PC-9 (cell line): ENCODE measurements at regions of chr5 and their contacts with region 1.

Region 1: DNA sequence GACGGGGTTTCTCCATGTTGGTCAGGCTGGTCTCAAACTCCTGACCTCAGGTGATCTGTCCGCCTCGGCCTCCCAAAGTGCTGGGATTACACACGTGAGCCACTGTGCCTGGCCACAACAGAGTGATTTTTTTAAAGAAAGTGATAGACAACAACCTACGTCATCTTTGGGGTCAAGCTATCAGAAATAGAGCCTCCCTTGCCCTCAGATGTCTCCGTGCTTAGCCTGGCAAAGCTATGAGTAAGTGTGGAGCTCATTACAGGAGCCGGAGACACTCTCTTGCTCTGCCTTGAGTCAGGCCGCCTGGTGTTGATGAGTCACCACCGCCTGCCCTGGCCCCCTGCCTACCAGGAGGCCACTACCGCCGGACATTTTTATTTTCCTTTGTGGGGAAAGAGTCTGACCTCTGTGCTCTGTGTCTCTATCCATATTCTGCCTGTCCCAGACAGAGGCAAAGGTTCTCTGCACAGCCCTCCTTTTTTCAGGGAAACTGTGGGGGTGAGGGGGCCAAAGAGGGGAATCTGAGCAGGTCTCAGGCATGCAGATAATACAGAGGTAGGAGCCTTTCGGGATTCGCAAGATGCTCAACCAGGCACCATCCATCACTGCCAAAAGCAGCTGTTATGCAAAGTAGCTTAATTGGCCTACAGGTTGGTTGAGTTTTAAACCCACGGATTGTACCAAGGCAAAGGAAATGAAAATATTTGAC is 123.7 kb upstream of the CPEB4 start:
- DNase-seq: peak; percentile 89 to 95
- H3K4me3 ChIP-seq: no peak overlapping the region
- H3K27ac ChIP-seq: peak overlapping the region; percentile 91
- H3K4me1 ChIP-seq: peaks cover 46% of the 10 kb centered on the region
- H3K27me3 ChIP-seq: no peaks in the 10 kb centered on the region
- CTCF ChIP-seq: no peak

Region 2: DNA sequence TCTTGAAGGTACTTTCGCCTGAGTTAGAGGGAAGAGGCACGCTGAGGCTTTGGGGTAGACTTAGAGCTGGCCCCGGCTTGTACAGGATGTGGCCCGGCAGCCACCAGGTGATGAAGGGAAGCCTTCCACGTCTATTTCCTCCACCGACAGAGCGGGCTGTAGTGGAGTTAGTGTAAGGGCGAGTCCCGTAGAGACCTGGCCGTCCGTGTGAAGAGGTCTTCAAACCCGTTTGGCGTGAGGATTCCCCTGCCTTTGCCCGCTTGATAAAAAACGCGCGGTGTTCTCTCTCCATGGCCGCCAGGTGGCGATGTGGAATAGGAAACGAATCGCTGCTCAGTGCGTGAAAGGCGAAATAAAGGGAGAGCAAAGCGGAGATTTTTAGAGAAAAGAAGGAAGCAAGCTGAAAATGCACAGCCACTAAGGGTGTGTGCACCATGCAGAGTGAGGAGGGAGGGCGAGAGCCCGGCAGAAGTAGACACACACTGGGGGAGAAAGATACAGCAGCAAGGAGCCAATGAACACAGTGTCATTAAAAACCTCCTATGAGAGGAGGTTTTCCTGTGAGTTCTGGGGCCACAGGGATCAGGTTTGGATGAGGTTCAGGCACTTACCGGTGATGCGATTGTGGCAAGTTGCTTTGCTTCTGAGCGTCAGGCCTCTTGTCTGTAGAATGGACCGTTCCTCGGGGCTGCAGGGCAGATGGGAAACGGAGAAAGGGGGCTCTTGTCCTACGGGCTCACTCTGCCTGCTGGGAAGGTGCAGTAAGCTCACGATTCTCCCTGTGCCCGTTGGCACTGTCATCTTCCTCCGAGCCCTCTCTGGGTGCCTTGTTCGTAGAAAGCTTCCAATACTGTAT is 470.4 kb before region 1 on chr5:
- CTCF ChIA-PET with region 1: no interaction called
- POLR2A ChIA-PET with region 1: no interaction called
- intact Hi-C with region 1: loop called (anchors 10 kb)
- DNase-seq: peak; percentile 71 to 83
- H3K4me3 ChIP-seq: peak overlapping the region; percentile 45; the same call in 1 of the 2 replicates
- H3K27ac ChIP-seq: peak overlapping the region; percentile 28
- H3K4me1 ChIP-seq: peaks cover 26% of the 10 kb centered on the region
- H3K27me3 ChIP-seq: no peaks in the 10 kb centered on the region
- CTCF ChIP-seq: peak; percentile 92

Region 3: DNA sequence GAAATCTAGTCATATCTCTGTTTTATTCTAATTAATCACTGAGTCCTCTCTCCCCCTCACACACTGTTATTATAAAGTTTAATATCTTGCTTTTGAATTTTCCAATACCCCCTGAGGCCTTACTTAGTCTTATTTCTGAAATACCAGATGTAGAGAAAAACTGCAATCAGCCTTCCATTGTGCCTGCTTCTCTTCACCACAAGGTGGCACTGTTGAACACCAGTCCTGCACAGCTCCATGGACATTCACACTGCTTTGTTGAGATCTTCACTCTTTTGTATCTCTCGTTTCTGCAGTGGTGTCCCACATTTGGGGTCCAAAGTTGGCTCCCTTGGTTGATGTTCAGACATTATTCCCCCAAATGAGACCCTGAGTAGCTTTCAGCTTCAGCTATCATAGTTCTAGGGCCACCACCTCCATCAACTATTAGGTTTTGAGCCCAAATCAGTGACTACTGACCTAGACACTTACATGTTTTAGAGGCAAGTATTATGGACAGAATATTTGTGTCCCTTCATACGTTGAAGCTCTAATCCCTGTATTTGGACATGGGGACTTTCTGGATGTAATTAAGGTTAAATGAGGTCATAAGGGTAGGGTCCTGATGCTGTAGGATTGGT is 172.3 kb before region 1 on chr5:
- CTCF ChIA-PET with region 1: no interaction called
- POLR2A ChIA-PET with region 1: no interaction called
- intact Hi-C with region 1: no loop called
- DNase-seq: peak in 1 of 2 experiments; percentile 9
- H3K4me3 ChIP-seq: no peak overlapping the region
- H3K27ac ChIP-seq: no peak overlapping the region
- H3K4me1 ChIP-seq: no peaks in the 10 kb centered on the region
- H3K27me3 ChIP-seq: no peaks in the 10 kb centered on the region
- CTCF ChIP-seq: peak; percentile 87

Region 4: GRCh38 chr5:173781814-173782670 is 17.6 kb after region 1 on chr5:
- CTCF ChIA-PET with region 1: no interaction called
- POLR2A ChIA-PET with region 1: interaction called, 5 read pairs
- intact Hi-C with region 1: loop called (anchors 2 kb)
- DNase-seq: peak; percentile 56 to 62
- H3K4me3 ChIP-seq: peak overlapping the region; percentile 7; the same call in 1 of the 2 replicates
- H3K27ac ChIP-seq: peak overlapping the region; percentile 78
- H3K4me1 ChIP-seq: peaks cover 47% of the 10 kb centered on the region
- H3K27me3 ChIP-seq: no peaks in the 10 kb centered on the region
- CTCF ChIP-seq: no peak

Region 5: DNA sequence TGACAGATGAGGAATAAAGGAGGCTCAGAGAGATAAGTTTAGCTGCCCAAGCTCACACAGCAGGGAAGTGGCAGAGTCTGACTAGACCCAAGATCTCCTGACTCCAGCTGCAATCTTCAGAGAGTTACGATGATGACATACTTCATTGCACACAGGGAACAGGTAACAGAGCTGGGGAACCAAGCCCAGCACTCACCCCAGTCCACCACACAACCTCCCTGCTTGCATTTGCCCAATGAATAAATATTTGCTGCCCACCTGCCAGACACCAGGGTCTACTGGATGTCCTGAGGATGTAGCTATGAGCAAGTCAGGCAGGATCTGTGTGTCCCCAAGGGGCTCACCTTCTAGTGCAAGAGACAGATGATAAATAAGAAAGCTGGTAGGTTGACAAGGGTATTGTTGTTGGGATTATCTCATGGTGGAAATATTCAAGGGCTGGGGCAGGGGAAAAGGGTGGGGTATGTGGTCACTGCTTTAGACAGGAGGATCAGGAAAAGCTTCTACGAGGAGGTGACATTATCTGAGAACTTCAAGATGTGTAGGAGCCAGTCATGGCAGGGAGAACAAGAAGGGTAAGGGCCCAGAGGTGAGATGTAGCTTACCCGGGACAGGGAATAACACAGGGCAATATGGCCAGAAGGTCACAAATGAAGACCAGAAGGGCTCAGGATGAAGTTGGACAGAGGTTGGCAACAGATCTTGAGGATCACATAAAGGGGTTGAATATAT is 95.1 kb after region 1 on chr5:
- CTCF ChIA-PET with region 1: interaction called, 3 read pairs
- POLR2A ChIA-PET with region 1: interaction called, 22 read pairs
- intact Hi-C with region 1: loop called (anchors 1 kb)
- DNase-seq: peak; percentile 73 to 83
- H3K4me3 ChIP-seq: no peak overlapping the region
- H3K27ac ChIP-seq: peak overlapping the region; percentile 54
- H3K4me1 ChIP-seq: peaks cover 50% of the 10 kb centered on the region
- H3K27me3 ChIP-seq: no peaks in the 10 kb centered on the region
- CTCF ChIP-seq: no peak

Region 6: DNA sequence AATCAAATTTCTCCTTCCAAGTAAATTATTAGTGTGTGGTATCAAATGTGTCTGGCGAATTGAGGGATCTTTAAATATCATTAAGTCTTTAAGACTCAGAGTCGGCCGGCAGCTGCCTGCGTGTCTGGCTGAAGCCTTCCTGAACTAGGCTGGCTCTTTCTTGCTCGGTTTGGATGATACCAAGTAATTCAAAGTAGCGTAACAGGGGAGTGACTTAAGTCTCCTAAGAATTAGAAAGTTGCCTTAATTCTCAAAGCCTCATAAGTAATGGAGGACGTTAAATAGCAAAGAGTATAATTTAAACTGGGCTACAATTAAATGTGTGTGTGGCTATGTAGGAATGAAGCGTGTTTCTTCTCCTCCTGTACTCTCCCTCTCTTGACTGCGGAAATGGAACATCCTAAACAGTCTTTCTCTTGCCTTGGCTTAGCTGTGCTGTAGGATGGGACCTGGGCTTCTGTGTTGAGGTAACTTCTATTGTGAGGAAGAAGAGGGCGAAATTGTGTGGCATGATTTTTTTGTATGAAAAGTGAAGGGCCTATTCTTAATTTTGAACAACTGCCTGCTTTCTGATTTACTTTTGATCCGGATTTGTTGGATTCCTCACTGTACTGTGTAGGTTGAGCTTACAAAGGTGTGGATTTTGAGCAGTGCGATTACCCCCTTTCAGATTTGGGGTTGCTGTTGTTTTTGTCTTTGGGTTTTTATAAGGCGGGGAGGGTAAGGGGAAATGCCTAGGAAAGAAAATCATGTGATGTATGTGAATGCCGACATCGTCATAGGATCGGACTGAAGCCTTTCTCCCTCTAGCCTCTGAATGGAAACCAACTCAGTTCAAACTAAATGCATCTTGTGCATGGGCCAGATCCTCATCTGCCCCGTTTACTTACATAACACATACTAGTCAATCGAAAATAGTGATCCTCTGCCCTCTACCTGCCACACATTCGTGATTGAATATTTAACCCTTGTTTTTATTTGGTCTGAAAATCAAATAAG is 153.6 kb after region 1 on chr5:
- CTCF ChIA-PET with region 1: no interaction called
- POLR2A ChIA-PET with region 1: interaction called, 5 read pairs
- intact Hi-C with region 1: loop called (anchors 1 kb)
- DNase-seq: peak; percentile 53 to 76
- H3K4me3 ChIP-seq: peak overlapping the region; percentile 79
- H3K27ac ChIP-seq: peak overlapping the region; percentile 86
- H3K4me1 ChIP-seq: peaks cover 29% of the 10 kb centered on the region
- H3K27me3 ChIP-seq: no peaks in the 10 kb centered on the region
- CTCF ChIP-seq: peak; percentile 43; the same call in 1 of the 2 replicates